Gastrocnemius medialis (tissue), 4 donors: ENCODE measurements at regions of chr19 and their contacts with region 1.

Region 1: GRCh38 chr19:58499021-58499927 is 12.5 kb downstream of the SLC27A5 start:
- DNase-seq: peak; percentile 99 to 100
- ATAC-seq: peak; percentile 99
- H3K4me3 ChIP-seq: peak overlapping the region; percentile 65 to 78 (median 72)
- H3K27ac ChIP-seq: peak overlapping the region; percentile 77 to 87 (median 86)
- H3K4me1 ChIP-seq: peaks cover 12 to 18% of the 10 kb centered on the region in 2 donors
- H3K27me3 ChIP-seq: no peaks in the 10 kb centered on the region
- CTCF ChIP-seq: peak in 4 of 5 experiments; percentile 26 to 52 (median 30)
- POLR2A ChIP-seq: peak; percentile 13 to 30

Region 2: DNA sequence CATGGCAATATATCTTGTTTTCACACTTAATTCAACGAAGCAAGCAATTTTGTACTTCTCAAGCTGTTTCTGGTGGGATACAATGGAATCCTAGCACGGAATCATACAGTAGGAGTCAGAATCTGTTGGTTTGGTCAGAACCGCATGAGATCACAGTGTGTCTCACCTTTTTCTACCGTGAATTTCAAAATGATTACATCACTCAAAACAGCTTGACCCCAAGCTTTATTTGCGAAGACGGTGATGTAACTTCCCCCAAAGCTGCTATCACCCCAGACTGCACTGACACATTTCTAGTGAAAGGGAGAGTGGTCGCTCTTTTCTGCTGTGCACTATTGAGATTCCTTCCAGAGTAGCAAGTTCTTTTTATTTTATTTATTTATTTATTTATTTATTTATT is 534.5 kb before region 1 on chr19:
- in situ Hi-C with region 1: no loop called
- intact Hi-C with region 1: no loop called
- DNase-seq: no peak
- ATAC-seq: no peak
- H3K4me3 ChIP-seq: peak overlapping the region in 1 of 4 donors; percentile 13
- H3K27ac ChIP-seq: no peak overlapping the region
- H3K4me1 ChIP-seq: no peaks in the 10 kb centered on the region
- H3K27me3 ChIP-seq: no peaks in the 10 kb centered on the region
- CTCF ChIP-seq: no peak
- POLR2A ChIP-seq: no peak

Region 3: DNA sequence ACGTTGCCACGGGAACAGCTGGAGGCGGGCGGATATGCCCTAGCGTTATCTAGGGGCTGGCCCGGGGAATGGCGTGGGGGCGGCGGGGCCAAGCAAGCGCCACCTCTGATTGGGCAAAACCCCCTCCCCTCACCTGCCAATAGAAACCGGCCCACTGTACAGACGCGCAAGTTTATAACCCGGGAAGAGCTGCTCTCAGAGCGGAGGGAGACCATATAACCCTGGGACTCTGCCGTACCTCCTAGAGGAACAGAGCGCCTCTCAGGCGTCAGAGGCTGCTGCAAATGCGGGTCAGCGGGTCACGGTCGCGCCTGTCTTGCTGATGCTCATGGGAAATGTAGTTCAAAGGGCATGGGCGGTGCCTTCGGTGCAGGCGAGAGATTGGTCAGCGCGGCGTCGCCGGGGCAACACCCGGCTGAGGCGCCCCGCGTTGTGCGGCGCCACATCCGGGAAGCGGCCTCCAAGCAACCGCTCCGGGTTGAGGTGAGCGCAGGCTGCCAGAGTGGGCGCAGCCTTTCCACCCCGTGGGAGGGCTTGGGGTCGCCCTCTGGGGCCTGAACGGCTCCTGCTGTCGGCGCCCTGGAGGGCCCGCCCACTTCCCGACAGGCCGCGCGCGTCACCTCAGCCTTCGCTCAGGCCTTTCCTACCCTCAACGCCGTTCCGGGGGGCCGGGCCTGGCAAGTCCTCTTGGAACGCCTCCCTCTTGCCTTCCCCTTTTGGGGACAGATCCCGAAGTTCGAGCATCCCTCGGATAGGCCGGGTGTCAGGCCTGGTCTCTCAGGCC is 23.4 kb before region 1 on chr19 and contains the start of gene ZNF446:
- in situ Hi-C with region 1: no loop called
- intact Hi-C with region 1: loop called (anchors 1 kb)
- DNase-seq: peak; percentile 94 to 95
- ATAC-seq: peak; percentile 97 to 98
- H3K4me3 ChIP-seq: peak within 1 kb of the TSS; percentile 76 to 83 (median 78)
- H3K27ac ChIP-seq: peak within 1 kb of the TSS; percentile 82 to 95 (median 86)
- H3K4me1 ChIP-seq: peaks cover 15 to 22% of the 10 kb centered on the region in 2 donors
- H3K27me3 ChIP-seq: no peaks in the 10 kb centered on the region
- CTCF ChIP-seq: no peak
- POLR2A ChIP-seq: peak; percentile 60 to 65
- total RNA-seq, gene ZNF446: 7.5 to 13.1 (median 8.9) TPM

Region 4: GRCh38 chr19:58519355-58520256 is 20.3 kb after region 1 on chr19 and contains the start of gene ZBTB45:
- in situ Hi-C with region 1: no loop called
- intact Hi-C with region 1: loop called (anchors 1 kb)
- DNase-seq: peak; percentile 86 to 90
- ATAC-seq: peak; percentile 93
- H3K4me3 ChIP-seq: peak within 1 kb of the TSS; percentile 69 to 88 (median 80)
- H3K27ac ChIP-seq: peak within 1 kb of the TSS; percentile 84 to 96 (median 94)
- H3K4me1 ChIP-seq: peaks cover 31 to 36% of the 10 kb centered on the region in 2 donors
- H3K27me3 ChIP-seq: no peaks in the 10 kb centered on the region
- CTCF ChIP-seq: peak; percentile 74 to 92 (median 87)
- POLR2A ChIP-seq: peak; percentile 11 to 34
- total RNA-seq, gene ZBTB45: 5.9 to 12.2 (median 9.6) TPM

Region 5: GRCh38 chr19:58543826-58544590 is 44.7 kb after region 1 on chr19 and contains the start of gene TRIM28:
- in situ Hi-C with region 1: no loop called
- intact Hi-C with region 1: loop called (anchors 1 kb)
- DNase-seq: peak; percentile 95 to 97
- ATAC-seq: peak; percentile 97 to 98
- H3K4me3 ChIP-seq: peak within 1 kb of the TSS; percentile 75 to 94 (median 88)
- H3K27ac ChIP-seq: peak within 1 kb of the TSS; percentile 92 to 97 (median 96)
- H3K4me1 ChIP-seq: peaks cover 21 to 26% of the 10 kb centered on the region in 2 donors
- H3K27me3 ChIP-seq: no peaks in the 10 kb centered on the region
- CTCF ChIP-seq: peak in 1 of 5 experiments; percentile 1
- POLR2A ChIP-seq: peak; percentile 97 to 98
- total RNA-seq, gene TRIM28: 145 to 239 (median 191) TPM

Region 6: DNA sequence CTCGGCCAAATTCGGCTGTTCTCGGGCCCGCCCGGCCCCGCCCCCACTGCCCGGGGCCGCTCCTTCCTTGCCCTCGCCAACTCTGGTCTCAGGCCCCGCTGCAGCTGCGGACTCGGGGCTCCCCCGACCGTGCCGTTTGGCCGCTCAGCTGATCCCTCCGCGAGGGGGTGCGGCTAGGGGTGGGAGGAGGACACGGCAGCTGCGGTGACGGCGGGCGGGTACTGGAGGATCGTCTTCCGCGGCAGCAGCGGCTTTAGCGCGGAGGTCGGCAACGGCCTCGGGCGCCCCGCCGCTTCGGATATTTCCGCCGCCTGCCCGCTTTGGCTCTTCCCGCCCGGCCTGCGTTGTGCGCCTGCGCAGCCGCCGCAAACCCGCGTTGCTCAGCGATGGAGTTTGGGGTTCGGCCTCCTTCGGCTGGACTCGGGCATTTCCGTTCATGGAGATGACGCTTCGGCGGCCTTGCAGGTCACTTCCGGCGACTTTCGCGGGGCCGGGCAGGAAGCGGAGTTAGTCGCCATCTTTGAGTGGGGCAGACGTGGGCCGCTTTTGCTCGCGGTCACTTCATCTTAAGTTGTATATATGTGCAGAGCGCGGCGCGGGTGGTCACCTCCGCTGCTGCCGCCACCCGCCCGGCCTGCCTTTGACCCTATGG is 59.5 kb after region 1 on chr19:
- in situ Hi-C with region 1: no loop called
- intact Hi-C with region 1: no loop called
- DNase-seq: peak; percentile 99
- ATAC-seq: peak; percentile 81 to 84
- H3K4me3 ChIP-seq: peak overlapping the region; percentile 72 to 80 (median 78)
- H3K27ac ChIP-seq: peak overlapping the region; percentile 97 to 99 (median 97)
- H3K4me1 ChIP-seq: peaks cover 55 to 73% of the 10 kb centered on the region in 2 donors
- H3K27me3 ChIP-seq: no peaks in the 10 kb centered on the region
- CTCF ChIP-seq: no peak
- POLR2A ChIP-seq: peak; percentile 60 to 69

Region 7: DNA sequence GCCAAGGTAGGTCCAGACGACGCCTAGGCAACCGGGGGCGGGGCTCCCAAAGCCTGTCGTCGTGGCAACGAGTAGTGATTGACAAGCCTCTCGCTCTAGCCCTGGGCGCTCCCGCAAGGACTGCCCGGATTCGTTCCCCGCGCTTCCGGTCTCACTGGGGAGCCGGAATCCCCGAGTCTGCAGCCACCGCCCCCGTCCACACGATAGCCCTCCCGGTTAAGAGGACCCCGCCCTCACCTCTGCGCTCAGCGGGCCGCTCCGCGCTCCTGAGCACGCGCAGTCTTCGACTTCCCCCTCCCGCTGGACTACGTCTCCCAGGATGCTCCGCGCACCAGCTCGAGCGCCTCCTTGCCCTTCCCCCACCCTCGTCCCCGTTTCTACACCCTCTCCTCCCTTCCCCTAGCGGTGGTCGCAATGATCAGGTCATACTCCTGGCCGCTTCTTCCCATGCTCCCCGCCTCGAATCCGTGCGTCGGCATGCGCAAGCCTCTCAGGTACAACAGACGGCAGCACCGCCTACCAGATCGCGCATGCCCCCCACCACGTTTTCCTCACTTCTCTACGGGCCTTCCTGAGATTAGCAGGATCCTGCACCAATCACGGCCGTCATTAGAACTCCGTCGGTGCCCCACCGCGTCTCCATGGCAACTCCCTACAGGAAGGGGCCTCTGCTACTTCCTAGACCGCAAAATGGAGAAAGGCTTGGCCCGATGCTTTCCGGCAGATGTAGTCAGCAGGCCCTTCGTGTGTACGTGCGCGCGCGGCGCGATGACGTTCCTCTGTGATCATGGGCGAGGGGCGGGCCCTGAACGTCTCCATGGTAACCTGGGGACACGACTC is 73.8 kb after region 1 on chr19 and contains the start of gene MZF1:
- in situ Hi-C with region 1: no loop called
- intact Hi-C with region 1: loop called (anchors 1 kb)
- DNase-seq: peak; percentile 100
- ATAC-seq: peak; percentile 82 to 84
- H3K4me3 ChIP-seq: peak within 1 kb of the TSS; percentile 70 to 85 (median 76)
- H3K27ac ChIP-seq: peak within 1 kb of the TSS; percentile 95 to 99 (median 98)
- H3K4me1 ChIP-seq: peaks cover 18 to 24% of the 10 kb centered on the region in 2 donors
- H3K27me3 ChIP-seq: no peaks in the 10 kb centered on the region
- CTCF ChIP-seq: peak in 4 of 5 experiments; percentile 8 to 41 (median 26)
- POLR2A ChIP-seq: peak; percentile 37 to 40
- total RNA-seq, gene MZF1: 6.8 to 21.5 (median 15.1) TPM